ENCODE measurements at regions of chr2 and their contacts with region 1.

Region 1: GRCh38 chr2:16773080-16773713 is 107.6 kb upstream of the CYRIA start:
- H3K4me3 ChIP-seq: no peak overlapping the region
- H3K27ac ChIP-seq: no peak overlapping the region
- H3K4me1 ChIP-seq: no peaks in the 10 kb centered on the region
- CTCF ChIP-seq: peak; percentile 66

Region 2: GRCh38 chr2:16559278-16560067 is 213.7 kb before region 1 on chr2:
- CTCF ChIA-PET with region 1: no interaction called
- POLR2A ChIA-PET with region 1: no interaction called
- H3K4me3 ChIP-seq: no peak overlapping the region
- H3K27ac ChIP-seq: no peak overlapping the region
- H3K4me1 ChIP-seq: no peaks in the 10 kb centered on the region
- CTCF ChIP-seq: no peak

Region 3: GRCh38 chr2:16745466-16745865 is 27.7 kb before region 1 on chr2:
- CTCF ChIA-PET with region 1: no interaction called
- POLR2A ChIA-PET with region 1: no interaction called
- H3K4me3 ChIP-seq: no peak overlapping the region
- H3K27ac ChIP-seq: no peak overlapping the region
- H3K4me1 ChIP-seq: no peaks in the 10 kb centered on the region
- CTCF ChIP-seq: no peak

Region 4: DNA sequence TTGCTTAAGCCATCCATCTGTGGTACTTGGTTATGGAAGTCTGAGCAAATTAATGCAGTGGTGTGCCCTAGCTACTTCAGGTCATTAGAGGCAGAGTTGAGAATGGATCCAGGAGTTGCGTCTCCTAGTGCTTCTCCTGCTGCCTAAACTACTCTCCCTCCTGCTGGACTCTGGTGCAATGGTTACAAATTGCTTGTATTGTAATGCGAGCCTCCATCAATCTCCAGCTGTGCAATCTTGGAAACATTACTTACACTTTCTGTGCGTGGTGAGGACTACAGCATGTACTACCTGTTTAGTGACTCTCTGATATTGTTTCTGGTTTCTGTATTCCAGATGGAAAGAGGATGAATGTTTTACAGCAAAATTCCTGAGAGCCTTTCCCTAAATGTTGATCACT is 11.5 kb after region 1 on chr2:
- CTCF ChIA-PET with region 1: interaction called, 31 read pairs
- POLR2A ChIA-PET with region 1: no interaction called
- H3K4me3 ChIP-seq: no peak overlapping the region
- H3K27ac ChIP-seq: no peak overlapping the region
- H3K4me1 ChIP-seq: no peaks in the 10 kb centered on the region
- CTCF ChIP-seq: no peak

Region 5: GRCh38 chr2:17148407-17149145 is 375.4 kb after region 1 on chr2:
- CTCF ChIA-PET with region 1: interaction called, 14 read pairs
- POLR2A ChIA-PET with region 1: no interaction called
- H3K4me3 ChIP-seq: no peak overlapping the region
- H3K27ac ChIP-seq: no peak overlapping the region
- H3K4me1 ChIP-seq: no peaks in the 10 kb centered on the region
- CTCF ChIP-seq: no peak

Region 6: GRCh38 chr2:17309741-17310339 is 536.6 kb after region 1 on chr2:
- CTCF ChIA-PET with region 1: interaction called, 15 read pairs
- POLR2A ChIA-PET with region 1: no interaction called
- H3K4me3 ChIP-seq: no peak overlapping the region
- H3K27ac ChIP-seq: no peak overlapping the region
- H3K4me1 ChIP-seq: no peaks in the 10 kb centered on the region
- CTCF ChIP-seq: peak; percentile 34; the same call in 1 of the 2 replicates

Region 7: GRCh38 chr2:17672583-17673317 is 899.6 kb after region 1 on chr2:
- CTCF ChIA-PET with region 1: interaction called, 16 read pairs
- POLR2A ChIA-PET with region 1: no interaction called
- H3K4me3 ChIP-seq: no peak overlapping the region
- H3K27ac ChIP-seq: no peak overlapping the region
- H3K4me1 ChIP-seq: no peaks in the 10 kb centered on the region
- CTCF ChIP-seq: no peak